ENCODE measurements at regions of chr4 and their contacts with region 1.

Region 1: DNA sequence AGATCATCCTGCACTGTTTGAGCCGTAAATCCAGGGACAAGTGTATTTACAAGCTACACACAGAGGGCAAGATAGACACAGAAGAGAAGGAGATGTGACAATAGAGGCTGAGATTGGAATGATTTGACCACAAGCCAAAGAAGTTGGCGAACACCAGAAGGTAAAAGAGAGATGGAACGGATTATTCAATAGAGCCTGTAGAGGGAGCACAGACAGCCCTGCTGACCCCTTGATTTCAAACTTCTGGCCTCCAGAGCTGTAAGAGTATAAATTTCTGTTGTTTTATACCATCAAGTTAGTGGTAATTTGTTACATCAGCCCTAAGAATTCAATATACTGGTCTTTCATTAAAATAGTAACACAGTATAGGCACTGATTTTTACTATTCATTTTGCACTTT is 447.8 kb downstream of the FAT4 start:
- DNase-seq: peak; percentile 10
- ATAC-seq: peak; percentile 31; the same call in 1 of the 2 replicates
- H3K4me3 ChIP-seq: no peak overlapping the region
- H3K27ac ChIP-seq: no peak overlapping the region
- H3K4me1 ChIP-seq: no peaks in the 10 kb centered on the region
- H3K27me3 ChIP-seq: no peaks in the 10 kb centered on the region
- CTCF ChIP-seq: peak; percentile 53; the same call in 1 of the 2 replicates

Region 2: GRCh38 chr4:125638790-125639621 is 123.5 kb before region 1 on chr4:
- CTCF ChIA-PET with region 1: no interaction called
- POLR2A ChIA-PET with region 1: no interaction called
- intact Hi-C with region 1: no loop called
- DNase-seq: no peak
- ATAC-seq: no peak
- H3K4me3 ChIP-seq: no peak overlapping the region
- H3K27ac ChIP-seq: no peak overlapping the region
- H3K4me1 ChIP-seq: no peaks in the 10 kb centered on the region
- H3K27me3 ChIP-seq: no peaks in the 10 kb centered on the region
- CTCF ChIP-seq: no peak

Region 3: DNA sequence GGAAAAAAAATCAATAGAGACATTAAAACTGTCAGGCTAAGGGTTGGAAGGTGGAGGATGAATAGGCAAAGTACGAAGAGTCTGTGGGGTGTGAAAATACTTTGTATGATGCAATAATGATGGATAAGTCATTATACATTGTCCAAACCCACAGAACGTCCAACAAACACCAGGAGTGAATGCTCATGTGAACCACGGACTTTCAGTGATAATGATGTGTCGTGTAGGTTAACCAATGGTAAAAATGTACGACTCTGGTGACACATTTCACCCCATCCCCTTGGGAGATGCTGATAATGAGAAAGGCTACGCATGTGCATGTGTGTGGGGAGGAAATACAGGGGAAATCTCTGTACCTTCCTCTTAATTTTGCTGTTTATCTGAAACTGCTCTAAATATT is 217.4 kb after region 1 on chr4:
- CTCF ChIA-PET with region 1: no interaction called
- POLR2A ChIA-PET with region 1: no interaction called
- intact Hi-C with region 1: loop called (anchors 5 kb)
- DNase-seq: no peak
- ATAC-seq: no peak
- H3K4me3 ChIP-seq: no peak overlapping the region
- H3K27ac ChIP-seq: no peak overlapping the region
- H3K4me1 ChIP-seq: no peaks in the 10 kb centered on the region
- H3K27me3 ChIP-seq: no peaks in the 10 kb centered on the region
- CTCF ChIP-seq: no peak

Region 4: DNA sequence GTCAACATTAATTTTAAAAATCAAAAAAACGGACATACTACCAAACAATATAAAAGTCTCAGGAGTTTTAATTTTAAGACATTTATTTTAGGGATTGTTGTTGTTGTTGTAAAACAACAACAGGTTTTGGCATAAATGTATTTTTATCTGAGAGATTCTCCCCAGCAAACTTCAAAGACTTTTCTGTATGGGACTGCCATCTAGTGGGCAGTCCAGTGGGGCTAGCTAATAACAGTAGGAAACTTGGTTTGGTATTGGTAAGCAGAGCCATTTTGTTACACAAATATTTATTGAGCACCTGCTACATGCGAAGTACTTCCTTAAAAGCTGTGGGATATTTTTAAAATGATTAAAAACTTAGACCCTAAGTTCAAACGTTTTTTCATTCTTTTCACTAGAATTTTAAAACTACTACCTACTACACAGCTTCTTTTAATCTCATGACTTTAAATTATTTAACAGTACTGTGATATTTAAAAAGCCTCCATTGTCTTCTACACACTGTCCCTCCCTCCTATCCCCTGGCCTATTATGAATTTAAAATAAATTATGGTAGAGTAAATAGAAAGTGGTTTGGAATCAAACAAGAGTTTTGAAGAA is 841.8 kb after region 1 on chr4:
- CTCF ChIA-PET with region 1: no interaction called
- POLR2A ChIA-PET with region 1: no interaction called
- intact Hi-C with region 1: loop called (anchors 10 kb)
- DNase-seq: peak; percentile 38
- ATAC-seq: 0 out of 2 replicates have a peak, but pooled peaks have one; percentile 33
- H3K4me3 ChIP-seq: no peak overlapping the region
- H3K27ac ChIP-seq: no peak overlapping the region
- H3K4me1 ChIP-seq: no peaks in the 10 kb centered on the region
- H3K27me3 ChIP-seq: no peaks in the 10 kb centered on the region
- CTCF ChIP-seq: peak; percentile 70